ENCODE measurements at regions of chr2 and their contacts with region 1.

Region 1: GRCh38 chr2:101873543-101873942 is 118.2 kb upstream of the IL1R2 start:
- DNase-seq: no peak
- H3K4me3 ChIP-seq: no peak overlapping the region
- CTCF ChIP-seq: no peak
- POLR2A ChIP-seq: no peak

Region 2: DNA sequence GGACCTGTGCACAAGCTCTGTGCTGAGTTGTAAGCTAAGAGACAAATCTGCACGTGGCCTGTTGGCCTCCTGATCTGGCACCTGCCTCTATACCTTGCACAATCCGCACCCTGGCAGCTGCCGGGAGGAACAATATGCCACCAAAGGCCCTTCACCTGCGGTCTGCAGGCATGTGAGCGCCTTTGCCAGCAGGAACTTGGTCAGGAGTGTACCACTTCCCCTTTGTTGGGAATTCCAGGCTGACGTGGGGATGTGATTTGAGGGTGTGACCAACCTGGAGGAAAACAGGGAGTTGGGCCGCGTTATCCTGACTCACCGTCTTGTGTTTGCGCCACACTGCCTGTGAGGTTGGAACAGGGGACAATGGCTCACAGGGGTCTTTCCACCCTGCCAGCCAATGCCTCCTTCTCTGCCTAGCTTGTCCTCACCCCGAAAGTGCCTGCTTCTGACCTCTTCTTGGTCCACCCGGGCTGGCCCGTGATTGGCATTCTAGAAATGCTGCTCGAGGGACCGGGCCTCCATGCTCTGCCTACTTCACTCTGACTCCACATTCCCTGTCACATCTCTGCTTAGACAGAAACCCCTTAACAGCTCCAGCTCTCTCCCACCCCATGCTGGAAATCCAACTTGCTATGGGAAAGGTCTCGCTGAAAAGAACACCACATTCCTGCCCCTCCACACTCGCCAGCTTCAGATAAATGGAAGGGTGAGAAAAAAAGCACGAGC is 243.2 kb before region 1 on chr2:
- intact Hi-C with region 1: no loop called
- DNase-seq: peak; percentile 30 to 82
- H3K4me3 ChIP-seq: no peak overlapping the region
- CTCF ChIP-seq: no peak
- POLR2A ChIP-seq: no peak

Region 3: DNA sequence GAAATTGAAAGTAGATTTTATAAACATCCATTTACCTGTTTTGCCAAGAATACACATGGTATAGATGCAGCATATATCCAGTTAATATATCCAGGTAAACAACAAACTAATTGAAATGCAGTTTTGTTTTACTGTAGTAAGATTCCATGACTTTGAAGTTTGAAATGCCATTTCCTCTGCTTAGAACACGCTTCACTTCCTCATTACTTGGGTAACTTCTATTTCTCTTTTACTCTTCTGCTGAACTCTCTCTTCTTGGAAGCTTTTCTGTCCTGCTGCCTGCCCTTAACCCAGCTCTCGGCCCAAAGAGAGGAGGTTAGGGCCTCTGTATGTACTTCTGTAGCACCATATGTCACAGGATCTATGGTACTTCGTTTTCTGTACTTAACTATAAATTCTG is 299.2 kb after region 1 on chr2:
- intact Hi-C with region 1: loop called (anchors 10 kb)
- DNase-seq: no peak
- H3K4me3 ChIP-seq: no peak overlapping the region
- CTCF ChIP-seq: no peak
- POLR2A ChIP-seq: no peak

Region 4: DNA sequence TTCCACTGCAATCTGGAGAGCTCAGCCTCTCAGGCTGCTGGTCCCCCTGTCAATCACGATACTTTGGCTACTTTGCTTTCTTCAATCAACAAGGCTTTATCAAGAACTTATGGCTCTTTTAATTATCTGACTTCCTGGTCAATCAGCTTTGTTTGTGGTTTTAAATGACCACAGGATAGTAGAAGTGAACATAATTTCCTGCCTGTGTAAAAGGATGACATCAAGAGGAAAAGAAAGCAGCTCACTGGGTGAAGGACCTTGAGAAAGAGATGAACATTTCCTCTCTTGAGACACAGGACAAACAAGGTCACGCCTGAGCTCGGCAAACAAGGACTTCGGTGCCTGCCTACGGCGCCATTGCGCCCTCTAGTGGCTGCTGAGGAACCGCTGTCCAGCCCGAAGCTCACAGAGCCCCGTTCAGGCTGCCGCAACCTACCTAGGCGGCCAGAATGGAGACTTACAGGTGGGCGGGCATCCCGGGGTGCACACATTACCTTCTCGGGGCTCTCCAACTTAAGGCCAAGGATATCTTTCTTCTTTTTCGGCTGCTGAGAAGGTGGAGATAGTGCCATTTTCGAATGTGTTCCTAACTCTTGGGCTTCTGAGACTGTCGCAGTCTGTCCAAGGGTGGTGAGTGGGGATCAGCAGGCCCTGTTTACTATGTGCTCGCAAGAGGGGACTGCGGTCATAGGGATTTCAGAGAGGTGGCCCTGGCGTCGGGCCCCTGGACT is 367.3 kb after region 1 on chr2:
- intact Hi-C with region 1: loop called (anchors 10 kb)
- DNase-seq: peak; percentile 91 to 99
- H3K4me3 ChIP-seq: no peak overlapping the region
- CTCF ChIP-seq: peak in 1 of 3 donors; percentile 95
- POLR2A ChIP-seq: no peak

Measured in lower leg skin (tissue), 4 donors.